CD14-positive monocyte (primary cell): ENCODE measurements at regions of chr5 and their contacts with region 1.

Region 1: DNA sequence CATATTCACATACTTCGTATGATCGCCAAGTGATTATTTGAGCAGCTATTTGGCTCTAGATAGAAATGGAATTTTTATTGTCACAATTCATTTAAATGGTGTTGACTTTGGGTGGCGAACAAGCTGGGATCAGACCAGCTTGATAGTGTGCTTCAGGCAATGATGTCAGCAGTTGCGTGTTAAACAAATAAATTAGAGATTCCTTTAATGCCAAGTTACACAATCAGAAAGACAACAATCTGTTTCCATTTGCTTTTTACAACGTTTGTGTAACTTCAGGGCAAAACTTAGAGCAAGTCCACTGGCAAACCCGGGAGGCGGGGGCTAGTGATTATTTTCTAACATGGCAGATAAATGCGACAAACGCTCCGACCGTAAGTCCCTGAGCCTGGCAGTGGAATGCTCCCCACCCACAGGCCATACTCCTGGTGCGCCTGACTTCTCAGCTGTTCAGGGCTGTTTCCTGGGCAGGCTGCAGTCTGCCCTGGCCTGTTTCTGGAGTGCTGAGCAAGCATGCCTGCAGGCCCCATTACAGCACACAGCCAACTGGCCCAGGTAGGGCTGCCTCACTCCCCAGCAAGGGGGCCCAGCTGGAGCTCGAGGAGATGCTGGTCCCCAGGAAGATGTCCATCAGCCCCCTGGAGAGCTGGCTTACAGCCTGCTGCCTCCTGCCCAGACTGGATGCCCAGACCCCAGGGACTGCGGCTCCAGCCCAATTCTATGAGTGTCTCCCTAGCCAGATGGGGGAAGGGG is 88.7 kb downstream of the BASP1 start:
- DNase-seq: no peak
- H3K4me3 ChIP-seq: no peak overlapping the region
- H3K4me3 Mint-ChIP-seq: no peak overlapping the region
- H3K27ac ChIP-seq: no peak overlapping the region
- H3K27ac Mint-ChIP-seq: peak overlapping the region in 1 of 7 donors; percentile 58
- H3K4me1 ChIP-seq: peaks cover 32 to 40% of the 10 kb centered on the region in 2 donors
- H3K4me1 Mint-ChIP-seq: peaks cover 33% of the 10 kb centered on the region
- H3K27me3 ChIP-seq: no peaks in the 10 kb centered on the region
- H3K27me3 Mint-ChIP-seq: peaks cover 0 to 3% (median 0%) of the 10 kb centered on the region in 3 donors
- CTCF ChIP-seq: no peak

Region 2: DNA sequence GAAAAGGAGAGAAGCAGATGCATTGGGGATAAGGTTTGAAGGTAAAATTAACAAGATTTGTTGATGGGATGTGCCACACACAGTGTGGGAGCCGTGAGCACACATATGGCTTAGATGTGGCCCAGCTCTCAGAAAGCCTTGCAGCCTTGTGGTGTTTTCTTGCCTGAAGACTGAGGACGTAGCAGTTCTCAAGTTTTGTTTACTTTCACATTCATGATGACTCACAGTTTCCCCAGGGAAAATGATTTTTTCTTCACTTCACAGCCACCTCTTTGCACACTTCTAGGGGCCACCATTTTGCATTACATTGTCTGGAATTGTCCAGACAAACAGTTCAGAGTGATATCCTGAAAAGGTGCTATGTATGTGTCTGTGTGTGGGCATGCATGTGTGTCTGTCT is 37.5 kb after region 1 on chr5:
- intact Hi-C with region 1: loop called in 1 of 2 experiments (anchors 5 kb)
- DNase-seq: peak in 2 of 3 donors; percentile 15 to 33
- H3K4me3 ChIP-seq: no peak overlapping the region
- H3K4me3 Mint-ChIP-seq: no peak overlapping the region
- H3K27ac ChIP-seq: no peak overlapping the region
- H3K27ac Mint-ChIP-seq: peak overlapping the region in 1 of 7 donors; percentile 16
- H3K4me1 ChIP-seq: no peaks in the 10 kb centered on the region
- H3K4me1 Mint-ChIP-seq: peaks cover 9% of the 10 kb centered on the region
- H3K27me3 ChIP-seq: no peaks in the 10 kb centered on the region
- H3K27me3 Mint-ChIP-seq: peaks cover 0 to 3% (median 0%) of the 10 kb centered on the region in 3 donors
- CTCF ChIP-seq: no peak